ENCODE measurements at regions of chr3 and their contacts with region 1.

Region 1: DNA sequence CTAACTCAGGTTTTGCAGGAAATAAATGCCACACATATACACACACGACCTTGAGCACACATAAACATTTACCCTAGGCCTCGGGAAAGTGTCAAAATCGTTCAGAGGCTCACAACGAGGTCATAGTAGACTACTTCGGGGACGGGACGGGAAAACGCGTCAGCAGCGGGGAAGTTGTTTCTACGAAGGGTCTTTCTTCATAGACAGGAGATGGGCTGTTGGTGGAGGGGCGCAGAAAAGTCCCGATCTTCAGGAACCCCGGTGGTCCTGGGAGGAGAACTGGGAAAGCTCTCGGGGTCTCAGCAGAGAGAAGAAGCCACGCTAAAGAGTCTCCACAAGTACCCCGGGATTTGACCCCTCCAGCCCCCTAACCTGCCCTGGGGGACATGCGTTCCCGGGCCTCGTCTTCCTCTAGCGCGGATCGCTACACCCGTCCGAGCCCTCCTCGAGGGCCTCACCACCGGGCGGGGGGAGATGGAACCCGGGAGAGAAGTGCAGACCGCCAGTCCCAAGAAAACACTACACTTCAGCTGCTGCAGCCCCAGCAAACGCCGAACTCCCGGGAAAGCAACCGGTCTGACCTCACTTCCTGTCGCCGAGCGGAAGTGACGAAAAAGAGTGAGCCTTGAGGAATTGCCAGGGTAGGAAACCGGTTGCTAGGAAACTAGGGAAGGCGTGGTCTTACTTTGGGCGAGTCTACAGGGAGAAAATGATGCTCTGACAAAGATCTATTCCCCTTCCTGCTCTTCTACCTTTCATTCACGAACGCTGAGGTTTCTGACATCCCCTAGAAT is at the start of gene PIK3R4:
- DNase-seq: peak; percentile 97
- ATAC-seq: peak; percentile 83
- H3K4me3 ChIP-seq: peak within 1 kb of the TSS; percentile 82
- H3K27ac ChIP-seq: peak within 1 kb of the TSS; percentile 70
- H3K4me1 ChIP-seq: no peaks in the 10 kb centered on the region
- H3K27me3 ChIP-seq: no peaks in the 10 kb centered on the region
- CTCF ChIP-seq: no peak
- POLR2A ChIP-seq: peak; percentile 68
- RAD21 ChIP-seq: no peak
- total RNA-seq, gene PIK3R4: 24.7 and 27.2 TPM in 2 replicates

Region 2: DNA sequence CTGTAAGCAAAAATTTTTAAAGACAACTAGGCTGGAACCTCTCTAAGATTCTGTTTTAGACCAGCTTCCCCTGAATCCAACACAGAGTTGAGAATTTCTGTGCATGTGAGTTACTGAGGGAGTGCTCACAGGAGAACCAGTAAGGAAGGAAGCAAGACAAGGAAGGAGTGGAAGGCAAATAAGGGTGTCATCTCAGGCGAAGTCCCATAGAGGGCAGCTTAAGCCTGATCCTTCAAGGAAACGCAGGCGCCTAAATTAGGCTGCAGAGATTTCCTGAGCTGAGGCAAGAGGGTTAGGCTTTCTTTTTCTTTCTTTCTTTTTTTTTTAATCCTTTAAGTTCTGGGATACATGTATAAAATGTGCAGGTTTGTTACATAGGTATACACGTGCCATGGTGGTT is 265.7 kb before region 1 on chr3:
- CTCF ChIA-PET with region 1: no interaction called
- POLR2A ChIA-PET with region 1: no interaction called
- dilution Hi-C with region 1: no loop called
- in situ Hi-C with region 1: no loop called
- intact Hi-C with region 1: loop called (anchors 10 kb)
- DNase-seq: peak; percentile 28
- ATAC-seq: peak; percentile 65
- H3K4me3 ChIP-seq: no peak overlapping the region
- H3K27ac ChIP-seq: no peak overlapping the region
- H3K4me1 ChIP-seq: no peaks in the 10 kb centered on the region
- H3K27me3 ChIP-seq: no peaks in the 10 kb centered on the region
- CTCF ChIP-seq: peak; percentile 36
- POLR2A ChIP-seq: no peak
- RAD21 ChIP-seq: 0 out of 2 replicates have a peak, but pooled peaks have one; percentile 38

Region 3: GRCh38 chr3:130596484-130596883 is 150.0 kb before region 1 on chr3:
- CTCF ChIA-PET with region 1: no interaction called
- POLR2A ChIA-PET with region 1: no interaction called
- dilution Hi-C with region 1: no loop called
- in situ Hi-C with region 1: no loop called
- intact Hi-C with region 1: no loop called
- DNase-seq: no peak
- ATAC-seq: no peak
- H3K4me3 ChIP-seq: no peak overlapping the region
- H3K27ac ChIP-seq: no peak overlapping the region
- H3K4me1 ChIP-seq: no peaks in the 10 kb centered on the region
- H3K27me3 ChIP-seq: no peaks in the 10 kb centered on the region
- CTCF ChIP-seq: no peak
- POLR2A ChIP-seq: no peak
- RAD21 ChIP-seq: no peak

Region 4: GRCh38 chr3:130688015-130688688 is 58.3 kb before region 1 on chr3:
- CTCF ChIA-PET with region 1: interaction called, 3 read pairs
- POLR2A ChIA-PET with region 1: no interaction called
- dilution Hi-C with region 1: no loop called
- in situ Hi-C with region 1: no loop called
- intact Hi-C with region 1: loop called (anchors 10 kb)
- DNase-seq: no peak
- ATAC-seq: no peak
- H3K4me3 ChIP-seq: no peak overlapping the region
- H3K27ac ChIP-seq: no peak overlapping the region
- H3K4me1 ChIP-seq: no peaks in the 10 kb centered on the region
- H3K27me3 ChIP-seq: no peaks in the 10 kb centered on the region
- CTCF ChIP-seq: no peak
- POLR2A ChIP-seq: no peak
- RAD21 ChIP-seq: no peak

Region 5: DNA sequence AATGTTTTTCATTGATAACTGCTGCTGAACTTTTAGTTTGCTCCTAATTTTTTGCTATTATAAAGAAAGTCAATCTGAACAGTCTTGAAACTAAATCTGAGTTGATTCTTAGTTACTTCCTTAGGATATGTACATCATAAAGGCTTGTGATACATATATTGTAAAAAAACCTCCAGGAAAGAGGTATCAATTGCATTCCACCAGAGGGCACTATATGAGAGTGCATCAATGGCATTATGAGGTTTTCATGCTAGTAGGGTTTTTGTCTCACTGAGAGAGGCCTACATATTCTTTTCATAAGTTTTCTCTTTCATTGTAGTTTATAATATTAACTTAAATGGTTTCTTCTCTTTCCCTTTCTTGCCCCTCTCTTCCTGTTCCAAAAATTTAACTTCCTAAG is 46.7 kb before region 1 on chr3:
- CTCF ChIA-PET with region 1: no interaction called
- POLR2A ChIA-PET with region 1: no interaction called
- dilution Hi-C with region 1: no loop called
- in situ Hi-C with region 1: no loop called
- intact Hi-C with region 1: no loop called
- DNase-seq: peak; percentile 9
- ATAC-seq: no peak
- H3K4me3 ChIP-seq: no peak overlapping the region
- H3K27ac ChIP-seq: no peak overlapping the region
- H3K4me1 ChIP-seq: no peaks in the 10 kb centered on the region
- H3K27me3 ChIP-seq: no peaks in the 10 kb centered on the region
- CTCF ChIP-seq: peak; percentile 46
- POLR2A ChIP-seq: no peak
- RAD21 ChIP-seq: peak; percentile 38; the same call in 1 of the 2 replicates

Region 6: DNA sequence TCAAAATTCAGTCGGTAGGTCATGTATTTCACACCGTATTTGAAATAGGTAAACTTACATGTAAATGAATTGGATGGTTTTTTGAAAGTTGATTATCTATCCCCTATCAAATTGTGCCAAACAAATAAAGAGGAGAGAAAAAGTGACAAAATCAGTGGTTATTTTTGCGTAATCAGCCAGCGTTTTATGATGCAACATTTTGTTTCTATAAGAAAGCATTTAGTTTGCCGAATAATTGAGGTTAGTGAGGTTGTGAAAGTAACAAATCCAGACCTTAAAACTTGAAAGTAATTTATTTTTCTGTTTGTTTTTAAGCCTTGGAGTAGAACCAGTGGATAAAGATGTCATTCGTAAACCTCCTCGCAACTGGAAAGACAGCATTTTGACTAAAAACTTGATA is 250.8 kb after region 1 on chr3:
- CTCF ChIA-PET with region 1: no interaction called
- POLR2A ChIA-PET with region 1: no interaction called
- dilution Hi-C with region 1: no loop called
- in situ Hi-C with region 1: loop called (anchors 25 kb)
- intact Hi-C with region 1: no loop called
- DNase-seq: no peak
- ATAC-seq: no peak
- H3K4me3 ChIP-seq: no peak overlapping the region
- H3K27ac ChIP-seq: no peak overlapping the region
- H3K4me1 ChIP-seq: peaks cover 4% of the 10 kb centered on the region; the same call in 1 of the 2 replicates
- H3K27me3 ChIP-seq: no peaks in the 10 kb centered on the region
- CTCF ChIP-seq: no peak
- POLR2A ChIP-seq: no peak
- RAD21 ChIP-seq: no peak

Region 7: DNA sequence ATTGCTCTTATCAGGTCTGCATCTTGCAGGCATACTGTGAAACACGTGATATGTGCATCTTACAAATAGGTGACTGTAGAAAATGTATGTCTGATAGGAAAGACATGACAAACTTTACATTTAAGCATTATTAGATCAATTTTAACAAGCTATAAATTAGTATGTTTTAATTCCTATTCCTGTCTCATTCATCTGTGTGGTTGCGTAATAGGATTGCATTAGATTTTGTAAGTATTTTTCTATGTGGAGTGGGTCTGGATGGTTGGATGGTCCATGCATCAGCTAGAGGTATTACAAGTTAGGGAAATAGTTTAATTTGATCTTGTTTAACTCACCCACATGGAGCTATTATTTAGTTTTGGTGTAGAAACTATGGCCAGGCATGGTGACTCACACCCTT is 261.3 kb after region 1 on chr3:
- CTCF ChIA-PET with region 1: no interaction called
- POLR2A ChIA-PET with region 1: no interaction called
- dilution Hi-C with region 1: no loop called
- in situ Hi-C with region 1: no loop called
- intact Hi-C with region 1: no loop called
- DNase-seq: peak; percentile 28
- ATAC-seq: peak; percentile 11; the same call in 1 of the 2 replicates
- H3K4me3 ChIP-seq: no peak overlapping the region
- H3K27ac ChIP-seq: no peak overlapping the region
- H3K4me1 ChIP-seq: no peaks in the 10 kb centered on the region
- H3K27me3 ChIP-seq: no peaks in the 10 kb centered on the region
- CTCF ChIP-seq: no peak
- POLR2A ChIP-seq: no peak
- RAD21 ChIP-seq: no peak

Region 8: GRCh38 chr3:131026321-131027178 is 280.1 kb after region 1 on chr3 and contains the starts of genes ASTE1 and NEK11:
- CTCF ChIA-PET with region 1: no interaction called
- POLR2A ChIA-PET with region 1: no interaction called
- dilution Hi-C with region 1: no loop called
- in situ Hi-C with region 1: no loop called
- intact Hi-C with region 1: loop called (anchors 5 kb)
- DNase-seq: peak; percentile 73
- ATAC-seq: peak; percentile 99
- H3K4me3 ChIP-seq: peak within 1 kb of the TSS; percentile 96
- H3K27ac ChIP-seq: peak within 1 kb of the TSS; percentile 96
- H3K4me1 ChIP-seq: peaks cover 2% of the 10 kb centered on the region; the same call in 1 of the 2 replicates
- H3K27me3 ChIP-seq: no peaks in the 10 kb centered on the region
- CTCF ChIP-seq: no peak
- POLR2A ChIP-seq: peak; percentile 70
- RAD21 ChIP-seq: no peak
- total RNA-seq, gene ASTE1: 7.5 and 8.1 TPM in 2 replicates
- total RNA-seq, gene NEK11: 1.6 and 1.9 TPM in 2 replicates

Region 9: GRCh38 chr3:131494706-131495105 is 748.3 kb after region 1 on chr3:
- CTCF ChIA-PET with region 1: no interaction called
- POLR2A ChIA-PET with region 1: no interaction called
- dilution Hi-C with region 1: no loop called
- in situ Hi-C with region 1: loop called (anchors 25 kb)
- intact Hi-C with region 1: no loop called
- DNase-seq: no peak
- ATAC-seq: no peak
- H3K4me3 ChIP-seq: no peak overlapping the region
- H3K27ac ChIP-seq: no peak overlapping the region
- H3K4me1 ChIP-seq: no peaks in the 10 kb centered on the region
- H3K27me3 ChIP-seq: no peaks in the 10 kb centered on the region
- CTCF ChIP-seq: no peak
- POLR2A ChIP-seq: no peak
- RAD21 ChIP-seq: no peak

Measured in IMR-90 (cell line).